GM23248 (cell line): ENCODE measurements at regions of chr20 and their contacts with region 1.

Region 1: GRCh38 chr20:37282556-37282955 is 6.9 kb upstream of the MANBAL start:
- DNase-seq: peak; percentile 94
- H3K4me3 ChIP-seq: no peak overlapping the region
- H3K27ac ChIP-seq: peak overlapping the region; percentile 50
- H3K4me1 ChIP-seq: peaks cover 12% of the 10 kb centered on the region
- H3K27me3 ChIP-seq: no peaks in the 10 kb centered on the region

Region 2: GRCh38 chr20:37223053-37223452 is 59.5 kb before region 1 on chr20:
- in situ Hi-C with region 1: no loop called
- DNase-seq: peak; percentile 96
- H3K4me3 ChIP-seq: 0 out of 2 replicates have a peak overlapping the region, but pooled peaks have one; percentile 4
- H3K27ac ChIP-seq: peak overlapping the region; percentile 72
- H3K4me1 ChIP-seq: peaks cover 22% of the 10 kb centered on the region
- H3K27me3 ChIP-seq: no peaks in the 10 kb centered on the region

Region 3: DNA sequence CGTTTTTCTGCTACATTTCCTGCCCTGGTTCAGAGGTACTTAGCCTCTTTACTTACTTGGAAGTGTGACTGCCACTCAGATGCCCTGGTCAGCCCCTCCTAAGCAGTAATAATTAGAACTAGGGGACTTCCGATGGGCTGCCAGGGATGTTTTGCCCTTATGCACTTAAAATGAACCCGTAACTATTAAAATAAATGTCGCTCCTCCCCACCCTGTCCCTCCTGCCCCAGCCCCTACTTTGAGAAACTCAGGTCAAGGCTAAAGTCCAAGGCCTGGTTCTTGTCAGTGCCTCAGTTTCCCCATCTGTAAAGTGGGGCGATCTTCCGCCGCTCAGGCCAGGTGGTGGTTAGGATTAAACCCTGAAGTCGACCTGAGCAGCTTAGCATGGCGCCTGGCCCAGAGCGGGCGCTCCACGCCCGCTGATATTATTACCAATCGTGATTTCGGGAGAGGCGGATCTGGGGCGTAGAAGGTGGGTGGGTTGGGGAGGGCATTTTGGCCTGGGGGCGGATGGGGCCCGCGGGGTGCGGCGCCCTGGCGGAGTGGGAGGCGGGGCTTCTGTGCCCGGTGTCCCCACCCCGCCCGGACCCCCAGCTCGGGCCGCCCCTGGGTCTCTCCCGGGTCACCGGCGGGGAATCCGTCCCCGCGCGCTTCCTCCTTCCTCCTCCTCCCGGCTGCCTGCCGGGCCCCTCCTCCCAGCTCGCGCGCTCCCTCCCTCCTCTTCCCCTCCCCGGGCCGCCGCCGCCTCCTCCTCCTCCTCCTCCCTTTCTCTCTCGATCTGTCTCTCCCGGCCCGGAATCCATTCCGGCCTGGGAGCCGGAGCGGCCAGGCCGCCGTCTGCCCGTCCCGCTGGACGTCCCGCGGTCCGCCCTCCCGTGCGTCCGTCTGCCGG is 63.0 kb after region 1 on chr20 and contains the start of gene SRC:
- in situ Hi-C with region 1: no loop called
- DNase-seq: peak; percentile 83
- H3K4me3 ChIP-seq: peak within 1 kb of the TSS; percentile 79
- H3K27ac ChIP-seq: peak within 1 kb of the TSS; percentile 4; the same call in 1 of the 2 replicates
- H3K4me1 ChIP-seq: peaks cover 24% of the 10 kb centered on the region; the same call in 1 of the 2 replicates
- H3K27me3 ChIP-seq: no peaks in the 10 kb centered on the region
- total RNA-seq, gene SRC: 28.6 and 29.8 TPM in 2 replicates

Region 4: GRCh38 chr20:37384683-37385174 is 102.2 kb after region 1 on chr20:
- in situ Hi-C with region 1: loop called (anchors 10 kb)
- DNase-seq: peak; percentile 83
- H3K4me3 ChIP-seq: peak overlapping the region; percentile 43
- H3K27ac ChIP-seq: no peak overlapping the region
- H3K4me1 ChIP-seq: peaks cover 6% of the 10 kb centered on the region; the same call in 1 of the 2 replicates
- H3K27me3 ChIP-seq: no peaks in the 10 kb centered on the region